ENCODE measurements at regions of chr13 and their contacts with region 1.

Region 1: GRCh38 chr13:18921063-18921462 is 260.6 kb downstream of the TUBA3C start:
- DNase-seq: no peak
- ATAC-seq: no peak
- H3K4me3 ChIP-seq: no peak overlapping the region
- H3K27ac ChIP-seq: no peak overlapping the region
- H3K4me1 ChIP-seq: no peaks in the 10 kb centered on the region
- H3K27me3 ChIP-seq: no peaks in the 10 kb centered on the region
- CTCF ChIP-seq: no peak
- POLR2A ChIP-seq: no peak
- RAD21 ChIP-seq: no peak

Region 2: GRCh38 chr13:18936104-18936503 is 15.0 kb after region 1 on chr13:
- CTCF ChIA-PET with region 1: no interaction called
- POLR2A ChIA-PET with region 1: no interaction called
- RAD21 ChIA-PET with region 1: no interaction called
- intact Hi-C with region 1: loop called (anchors 2 kb)
- DNase-seq: no peak
- ATAC-seq: no peak
- H3K4me3 ChIP-seq: no peak overlapping the region
- H3K27ac ChIP-seq: no peak overlapping the region
- H3K4me1 ChIP-seq: no peaks in the 10 kb centered on the region
- H3K27me3 ChIP-seq: no peaks in the 10 kb centered on the region
- CTCF ChIP-seq: no peak
- POLR2A ChIP-seq: no peak
- RAD21 ChIP-seq: no peak

Region 3: DNA sequence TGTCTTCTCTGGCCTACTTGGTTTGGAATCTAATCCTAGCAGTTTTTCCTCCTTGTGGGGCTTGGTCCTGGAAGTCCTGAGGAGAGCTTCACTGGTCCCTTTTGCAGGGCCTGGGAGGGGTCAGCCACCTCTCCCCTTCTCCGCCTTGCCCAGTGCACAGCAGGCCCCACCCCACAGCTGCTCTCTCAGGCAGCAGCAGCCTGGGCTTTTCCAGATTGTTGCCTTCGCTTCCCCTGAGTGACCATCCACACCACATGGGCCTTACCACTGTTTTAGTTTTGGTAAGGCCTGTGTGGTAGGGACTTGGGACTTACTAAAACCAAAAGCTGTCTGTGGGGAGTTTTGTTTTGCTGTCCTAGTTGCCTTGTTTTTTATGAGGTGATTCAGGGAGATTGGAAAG is 723.9 kb after region 1 on chr13:
- CTCF ChIA-PET with region 1: no interaction called
- POLR2A ChIA-PET with region 1: no interaction called
- RAD21 ChIA-PET with region 1: no interaction called
- intact Hi-C with region 1: no loop called
- DNase-seq: no peak
- ATAC-seq: no peak
- H3K4me3 ChIP-seq: no peak overlapping the region
- H3K27ac ChIP-seq: no peak overlapping the region
- H3K4me1 ChIP-seq: no peaks in the 10 kb centered on the region
- H3K27me3 ChIP-seq: no peaks in the 10 kb centered on the region
- CTCF ChIP-seq: no peak
- POLR2A ChIP-seq: no peak
- RAD21 ChIP-seq: no peak